HEK293 (cell line): ENCODE measurements at regions of chr20 and their contacts with region 1.

Region 1: GRCh38 chr20:43691928-43692524 is 25.1 kb downstream of the MYBL2 start:
- H3K4me3 ChIP-seq: no peak overlapping the region
- H3K27ac ChIP-seq: no peak overlapping the region
- H3K4me1 ChIP-seq: no peaks in the 10 kb centered on the region
- CTCF ChIP-seq: 0 out of 2 replicates have a peak, but pooled peaks have one; percentile 16

Region 2: GRCh38 chr20:43537921-43538877 is 153.8 kb before region 1 on chr20:
- CTCF ChIA-PET with region 1: interaction called, 22 read pairs
- POLR2A ChIA-PET with region 1: no interaction called
- H3K4me3 ChIP-seq: no peak overlapping the region
- H3K27ac ChIP-seq: no peak overlapping the region
- H3K4me1 ChIP-seq: no peaks in the 10 kb centered on the region
- CTCF ChIP-seq: peak; percentile 57

Region 3: GRCh38 chr20:43636429-43636828 is 55.6 kb before region 1 on chr20:
- CTCF ChIA-PET with region 1: interaction called, 11 read pairs
- POLR2A ChIA-PET with region 1: no interaction called
- H3K4me3 ChIP-seq: no peak overlapping the region
- H3K27ac ChIP-seq: no peak overlapping the region
- H3K4me1 ChIP-seq: no peaks in the 10 kb centered on the region
- CTCF ChIP-seq: no peak

Region 4: GRCh38 chr20:43681468-43681942 is 10.5 kb before region 1 on chr20:
- CTCF ChIA-PET with region 1: no interaction called
- POLR2A ChIA-PET with region 1: no interaction called
- H3K4me3 ChIP-seq: no peak overlapping the region
- H3K27ac ChIP-seq: no peak overlapping the region
- H3K4me1 ChIP-seq: no peaks in the 10 kb centered on the region
- CTCF ChIP-seq: no peak